ENCODE measurements at regions of chr5 and their contacts with region 1.

Region 1: GRCh38 chr5:163564321-163564938 is 59.0 kb downstream of the MAT2B start:
- DNase-seq: peak; percentile 40 to 87 (median 64)
- H3K4me3 ChIP-seq: no peak overlapping the region
- H3K27ac ChIP-seq: no peak overlapping the region
- H3K4me1 ChIP-seq: peaks cover 7 to 17% of the 10 kb centered on the region in 2 donors
- H3K27me3 ChIP-seq: peaks cover 12% of the 10 kb centered on the region
- CTCF ChIP-seq: peak; percentile 80 to 90 (median 85)
- POLR2A ChIP-seq: no peak

Region 2: GRCh38 chr5:164002628-164003027 is 438.2 kb after region 1 on chr5:
- intact Hi-C with region 1: loop called in 1 of 2 experiments (anchors 10 kb)
- DNase-seq: no peak
- H3K4me3 ChIP-seq: no peak overlapping the region
- H3K27ac ChIP-seq: no peak overlapping the region
- H3K4me1 ChIP-seq: no peaks in the 10 kb centered on the region
- H3K27me3 ChIP-seq: no peaks in the 10 kb centered on the region
- CTCF ChIP-seq: no peak
- POLR2A ChIP-seq: no peak

Region 3: GRCh38 chr5:164013077-164013670 is 448.7 kb after region 1 on chr5:
- intact Hi-C with region 1: loop called (anchors 10 kb)
- DNase-seq: peak; percentile 36 to 82 (median 62)
- H3K4me3 ChIP-seq: no peak overlapping the region
- H3K27ac ChIP-seq: no peak overlapping the region
- H3K4me1 ChIP-seq: no peaks in the 10 kb centered on the region
- H3K27me3 ChIP-seq: no peaks in the 10 kb centered on the region
- CTCF ChIP-seq: peak; percentile 47 to 82 (median 74)
- POLR2A ChIP-seq: no peak

Region 4: DNA sequence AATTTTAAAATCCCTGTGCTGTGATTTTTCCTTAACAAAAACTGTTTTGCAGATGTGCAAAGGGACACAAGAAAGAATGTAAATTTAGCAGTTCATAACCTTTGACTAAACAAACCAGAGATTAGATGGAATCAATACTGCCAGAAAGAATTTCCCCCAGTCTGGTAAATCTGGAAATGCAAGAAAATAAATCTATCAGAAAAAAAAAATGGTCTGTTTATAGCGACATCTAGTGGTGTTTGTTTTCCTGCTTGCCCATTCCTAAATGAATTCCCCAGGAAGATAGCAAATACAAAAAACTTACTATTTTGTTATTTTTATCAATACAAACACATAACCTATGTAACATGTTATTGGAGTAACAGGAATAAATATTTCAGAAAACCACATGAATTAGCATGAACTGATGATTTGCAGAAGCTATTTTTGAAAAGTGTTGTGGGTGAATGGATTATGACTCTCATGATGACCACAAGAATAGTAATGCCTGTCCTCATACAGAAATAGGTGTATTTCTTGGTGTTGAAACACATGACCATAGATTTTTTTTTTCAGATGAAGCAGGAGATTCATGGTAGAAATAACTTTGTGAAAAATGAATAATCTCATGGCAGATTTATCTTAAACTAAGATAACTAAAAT is 1644.8 kb after region 1 on chr5:
- intact Hi-C with region 1: loop called in 1 of 2 experiments (anchors 10 kb)
- DNase-seq: no peak
- H3K4me3 ChIP-seq: no peak overlapping the region
- H3K27ac ChIP-seq: no peak overlapping the region
- H3K4me1 ChIP-seq: no peaks in the 10 kb centered on the region
- H3K27me3 ChIP-seq: no peaks in the 10 kb centered on the region
- CTCF ChIP-seq: peak; percentile 18 to 70 (median 58)
- POLR2A ChIP-seq: no peak